ENCODE measurements at regions of chr3 and their contacts with region 1.

Region 1: GRCh38 chr3:124281453-124282316 is 289.8 kb upstream of the ROPN1 start:
- DNase-seq: peak; percentile 54
- H3K4me3 ChIP-seq: no peak overlapping the region
- H3K27ac ChIP-seq: no peak overlapping the region
- H3K4me1 ChIP-seq: peaks cover 10% of the 10 kb centered on the region
- H3K27me3 ChIP-seq: peaks cover 0 to 2% of the 10 kb centered on the region in 2 experiments
- CTCF ChIP-seq: peak; percentile 46 to 55
- POLR2A ChIP-seq: no peak

Region 2: DNA sequence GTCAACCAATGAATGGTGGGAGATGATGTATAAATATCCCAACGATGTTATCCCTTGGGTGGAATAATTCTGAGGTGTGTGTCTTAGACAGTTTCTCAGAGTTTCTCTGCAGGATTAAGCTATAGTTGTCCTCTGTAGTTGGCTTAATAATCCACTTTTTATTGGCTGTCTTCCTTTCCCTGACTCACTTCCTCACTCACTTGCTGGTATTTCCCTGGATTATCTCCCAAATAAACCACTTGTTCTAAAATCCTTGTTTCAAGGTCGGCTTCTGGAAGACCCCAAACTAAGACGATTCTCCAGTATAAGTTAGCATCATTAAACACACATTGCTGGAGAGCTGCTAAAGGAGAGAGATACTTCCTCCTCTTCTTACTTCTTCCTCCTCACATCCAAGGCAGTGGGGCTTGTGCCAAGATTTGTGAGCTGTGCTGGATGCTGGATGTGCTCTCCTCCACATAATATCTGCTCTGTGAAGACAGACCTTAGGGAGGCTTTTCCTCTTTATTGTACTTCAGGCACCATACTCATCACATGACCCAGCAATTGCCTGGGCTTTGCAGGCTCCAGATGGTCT is 267.2 kb before region 1 on chr3:
- CTCF ChIA-PET with region 1: interaction called, 110 read pairs
- POLR2A ChIA-PET with region 1: no interaction called
- dilution Hi-C with region 1: no loop called
- intact Hi-C with region 1: loop called (anchors 1 kb)
- DNase-seq: peak; percentile 23
- H3K4me3 ChIP-seq: no peak overlapping the region
- H3K27ac ChIP-seq: no peak overlapping the region
- H3K4me1 ChIP-seq: peaks cover 7% of the 10 kb centered on the region
- H3K27me3 ChIP-seq: peaks cover 0 to 5% of the 10 kb centered on the region in 2 experiments
- CTCF ChIP-seq: no peak
- POLR2A ChIP-seq: no peak

Region 3: GRCh38 chr3:124097362-124098131 is 184.1 kb before region 1 on chr3:
- CTCF ChIA-PET with region 1: interaction called, 10 read pairs
- POLR2A ChIA-PET with region 1: no interaction called
- dilution Hi-C with region 1: no loop called
- intact Hi-C with region 1: no loop called
- DNase-seq: peak; percentile 34
- H3K4me3 ChIP-seq: no peak overlapping the region
- H3K27ac ChIP-seq: no peak overlapping the region
- H3K4me1 ChIP-seq: peaks cover 14% of the 10 kb centered on the region
- H3K27me3 ChIP-seq: no peaks in the 10 kb centered on the region
- CTCF ChIP-seq: no peak
- POLR2A ChIP-seq: no peak

Region 4: DNA sequence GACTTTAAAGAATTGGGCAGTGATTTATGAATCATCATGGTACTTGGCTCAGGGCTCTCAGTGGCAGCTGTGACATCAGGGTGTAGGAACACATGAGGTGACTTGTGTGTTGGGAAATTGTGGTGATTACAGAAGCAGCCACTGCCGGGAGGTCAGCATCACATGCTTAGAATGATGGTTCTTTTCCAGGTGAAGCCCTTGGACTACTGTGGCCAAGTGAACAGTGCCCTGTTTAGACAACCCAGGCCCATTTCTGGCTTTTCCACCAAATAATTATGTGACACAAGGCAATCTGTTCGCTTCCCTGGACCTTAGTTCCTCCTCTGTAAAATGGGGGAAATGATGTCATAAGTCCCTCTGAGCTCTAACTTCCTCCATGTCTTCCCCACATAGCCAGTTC is 150.1 kb before region 1 on chr3:
- CTCF ChIA-PET with region 1: no interaction called
- POLR2A ChIA-PET with region 1: no interaction called
- dilution Hi-C with region 1: no loop called
- intact Hi-C with region 1: no loop called
- DNase-seq: peak; percentile 19
- H3K4me3 ChIP-seq: no peak overlapping the region
- H3K27ac ChIP-seq: no peak overlapping the region
- H3K4me1 ChIP-seq: peaks cover 4% of the 10 kb centered on the region
- H3K27me3 ChIP-seq: no peaks in the 10 kb centered on the region
- CTCF ChIP-seq: no peak
- POLR2A ChIP-seq: no peak

Region 5: DNA sequence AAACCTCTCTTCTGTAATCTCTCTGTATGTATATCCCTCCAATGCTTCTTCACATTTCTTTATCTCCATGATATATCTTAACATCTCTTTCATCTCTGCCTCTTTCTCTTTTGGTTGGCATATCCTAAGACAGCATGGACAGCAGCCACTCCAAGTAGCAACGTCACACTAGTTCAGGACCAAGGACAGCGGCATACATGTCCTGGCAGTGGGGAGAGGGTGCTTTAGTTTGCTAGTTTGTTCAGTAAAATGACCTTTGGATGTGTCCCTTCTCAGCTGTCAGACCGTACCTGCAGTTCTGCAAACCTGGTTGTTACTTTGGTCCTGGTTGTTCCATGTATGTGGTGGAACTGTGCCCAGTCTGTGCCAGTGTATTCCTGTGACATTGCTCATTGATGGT is 64.1 kb before region 1 on chr3:
- CTCF ChIA-PET with region 1: no interaction called
- POLR2A ChIA-PET with region 1: no interaction called
- dilution Hi-C with region 1: no loop called
- intact Hi-C with region 1: no loop called
- DNase-seq: peak; percentile 64
- H3K4me3 ChIP-seq: no peak overlapping the region
- H3K27ac ChIP-seq: no peak overlapping the region
- H3K4me1 ChIP-seq: peaks cover 6% of the 10 kb centered on the region
- H3K27me3 ChIP-seq: peaks cover 0 to 2% of the 10 kb centered on the region in 2 experiments
- CTCF ChIP-seq: no peak
- POLR2A ChIP-seq: no peak

Region 6: DNA sequence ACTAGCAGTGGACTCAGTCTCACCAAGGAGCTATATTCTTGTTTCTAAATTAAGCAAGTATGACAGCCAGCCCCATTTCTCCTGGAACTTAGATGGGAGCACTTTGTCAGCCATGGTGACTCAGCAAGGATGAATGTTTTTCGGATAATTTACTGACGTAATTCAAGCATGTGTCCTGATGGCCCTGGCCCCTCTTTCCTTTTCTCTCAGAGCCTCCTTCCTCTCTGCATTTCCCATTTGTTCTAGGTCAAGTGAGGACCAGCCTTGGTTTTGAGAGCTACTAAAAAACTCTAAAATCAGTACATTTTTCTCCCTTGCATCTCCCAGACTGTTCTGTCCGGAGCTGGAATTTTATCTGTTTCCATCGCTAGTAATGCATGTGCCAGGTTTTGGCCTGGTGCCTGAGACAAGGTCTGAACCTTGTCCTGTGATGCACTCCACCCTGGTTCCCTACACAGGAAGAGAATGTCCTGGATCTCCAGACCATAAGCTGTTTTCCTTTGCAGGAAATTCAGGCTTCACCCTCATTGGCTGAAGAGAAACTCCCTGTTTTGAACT is 33.1 kb before region 1 on chr3:
- CTCF ChIA-PET with region 1: interaction called, 4 read pairs
- POLR2A ChIA-PET with region 1: no interaction called
- dilution Hi-C with region 1: no loop called
- intact Hi-C with region 1: loop called (anchors 2 kb)
- DNase-seq: peak; percentile 79
- H3K4me3 ChIP-seq: no peak overlapping the region
- H3K27ac ChIP-seq: peak overlapping the region; percentile 77
- H3K4me1 ChIP-seq: peaks cover 27% of the 10 kb centered on the region
- H3K27me3 ChIP-seq: no peaks in the 10 kb centered on the region
- CTCF ChIP-seq: no peak
- POLR2A ChIP-seq: no peak

Region 7: DNA sequence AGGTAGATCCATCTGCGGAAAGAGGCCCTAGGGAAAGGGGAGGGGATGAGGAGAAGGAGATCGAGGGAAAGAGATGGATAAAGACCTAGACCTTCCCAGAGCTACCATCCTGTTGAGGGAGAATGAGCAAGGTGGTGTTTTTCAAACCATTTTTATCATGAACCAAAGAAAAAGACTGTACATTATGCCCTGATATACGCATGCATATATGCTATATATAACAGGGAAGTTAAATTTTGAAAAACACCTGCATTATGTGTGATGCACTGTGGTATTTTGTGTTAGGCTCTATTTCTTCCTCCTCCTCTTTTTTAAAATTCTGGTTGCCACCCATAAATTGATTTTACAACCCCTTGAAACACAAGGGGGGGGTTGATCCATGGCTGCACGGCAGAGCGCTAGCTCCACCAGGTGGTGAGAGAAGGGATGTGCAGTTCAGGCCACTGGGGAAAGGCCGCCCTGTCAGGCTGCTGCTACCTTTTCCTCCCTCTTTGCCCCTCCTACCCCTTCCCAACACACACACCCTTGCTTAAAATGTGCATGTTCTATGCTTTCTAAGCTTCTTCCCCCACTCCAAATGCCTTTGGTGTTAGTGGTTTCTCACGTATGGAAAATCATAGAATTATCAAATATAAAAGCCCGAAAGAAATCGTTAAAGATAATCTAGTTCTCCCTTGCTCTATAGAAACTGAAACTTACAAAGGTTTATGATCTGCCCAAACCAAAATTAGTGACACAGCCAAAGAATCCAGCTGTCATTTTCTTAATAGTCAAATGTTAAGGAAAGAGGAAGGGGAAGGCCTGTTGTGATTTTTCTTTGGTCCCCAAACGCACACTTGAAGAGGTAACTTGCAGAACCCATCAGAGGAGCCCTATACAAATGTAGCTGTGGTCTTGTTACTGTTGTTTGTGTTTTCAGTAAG is 186.6 kb after region 1 on chr3:
- CTCF ChIA-PET with region 1: interaction called, 3 read pairs
- POLR2A ChIA-PET with region 1: no interaction called
- dilution Hi-C with region 1: no loop called
- intact Hi-C with region 1: loop called (anchors 2 kb)
- DNase-seq: peak; percentile 58
- H3K4me3 ChIP-seq: no peak overlapping the region
- H3K27ac ChIP-seq: no peak overlapping the region
- H3K4me1 ChIP-seq: no peaks in the 10 kb centered on the region
- H3K27me3 ChIP-seq: peaks cover 0 to 2% of the 10 kb centered on the region in 2 experiments
- CTCF ChIP-seq: peak; percentile 91 to 97
- POLR2A ChIP-seq: no peak

Measured in endothelial cell of umbilical vein (primary cell).